H1 (cell line): ENCODE measurements at regions of chr19 and their contacts with region 1.

Region 1: DNA sequence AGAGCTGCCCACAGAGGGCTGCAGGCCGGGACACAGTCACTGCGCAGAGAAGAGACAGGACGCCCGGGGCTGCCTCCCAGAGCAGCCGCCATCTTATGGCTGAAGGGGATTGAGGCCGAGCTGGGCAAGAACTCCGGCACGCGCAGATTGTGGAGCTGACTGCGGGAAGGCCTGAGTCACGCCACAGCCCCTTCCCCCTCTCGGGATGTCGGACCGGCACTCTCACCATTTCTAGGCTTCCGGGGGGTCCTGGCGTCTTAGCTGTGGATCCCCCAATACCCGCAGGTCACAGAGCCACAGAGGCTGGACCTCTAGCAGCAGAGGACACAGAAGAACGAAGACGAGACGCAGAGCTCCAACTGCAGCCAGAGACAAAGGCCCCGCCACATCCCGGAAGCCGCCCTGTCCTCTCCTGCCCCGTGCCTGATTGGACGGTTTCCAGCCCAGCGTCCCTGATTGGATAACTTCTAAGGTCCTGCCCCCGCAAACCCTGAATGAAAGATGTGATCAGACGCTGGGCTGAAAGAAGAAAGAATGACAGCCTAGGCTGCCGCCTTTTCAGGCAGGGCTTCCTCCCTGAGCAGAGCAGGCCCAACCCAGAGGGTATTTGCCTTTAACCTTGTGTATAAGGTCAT is at the start of gene ZNF43:
- DNase-seq: peak; percentile 88
- H3K4me3 ChIP-seq: peak within 1 kb of the TSS; percentile 47 to 91 (median 75)
- H3K27ac ChIP-seq: peak within 1 kb of the TSS; percentile 99
- H3K4me1 ChIP-seq: no peaks in the 10 kb centered on the region
- H3K27me3 ChIP-seq: no peaks in the 10 kb centered on the region
- CTCF ChIP-seq: no peak
- EP300 ChIP-seq: no peak
- POLR2A ChIP-seq: peak; percentile 97 to 99
- RAD21 ChIP-seq: 0 out of 4 replicates have a peak, but pooled peaks of 1 of the 2 experiments have one; percentile 1
- total RNA-seq, gene ZNF43: 50.0 and 53.1 TPM in 2 replicates

Region 2: GRCh38 chr19:21328885-21329605 is 506.9 kb before region 1 on chr19 and contains the start of gene ZNF708:
- CTCF ChIA-PET with region 1: no interaction called
- POLR2A ChIA-PET with region 1: interaction called, 10 read pairs
- DNase-seq: peak; percentile 80 to 83
- H3K4me3 ChIP-seq: peak within 1 kb of the TSS; percentile 89 to 98 (median 95)
- H3K27ac ChIP-seq: peak within 1 kb of the TSS; percentile 98
- H3K4me1 ChIP-seq: peaks cover 0 to 4% (median 0%) of the 10 kb centered on the region in 4 experiments; a peak in 2 of 7 replicates
- H3K27me3 ChIP-seq: no peaks in the 10 kb centered on the region
- CTCF ChIP-seq: no peak
- EP300 ChIP-seq: no peak
- POLR2A ChIP-seq: peak; percentile 90 to 99
- RAD21 ChIP-seq: no peak
- total RNA-seq, gene ZNF708: 40.0 and 41.5 TPM in 2 replicates

Region 3: DNA sequence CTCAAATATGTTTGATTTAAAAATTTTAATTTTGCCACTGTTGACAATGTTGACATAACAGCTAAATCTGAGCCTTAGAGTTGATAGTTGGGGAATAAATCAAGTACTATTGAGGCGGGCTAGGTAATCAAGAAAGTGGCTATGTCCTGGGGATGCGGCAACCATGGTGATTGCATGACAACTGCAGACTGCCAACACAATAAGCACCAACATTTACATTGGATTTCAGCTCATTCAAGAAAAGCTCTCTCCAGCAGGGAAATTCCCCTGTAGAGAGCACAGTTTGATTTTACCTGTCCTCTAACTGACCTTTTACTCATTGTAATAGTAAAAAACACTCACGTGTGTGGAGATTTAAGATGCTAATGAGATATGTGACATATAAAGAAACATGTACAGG is 131.6 kb before region 1 on chr19:
- CTCF ChIA-PET with region 1: no interaction called
- POLR2A ChIA-PET with region 1: interaction called, 11 read pairs
- DNase-seq: peak in 1 of 2 experiments; percentile 61
- H3K4me3 ChIP-seq: peak overlapping the region in 1 of 4 experiments; percentile 43; a peak in 1 of 8 replicates
- H3K27ac ChIP-seq: no peak overlapping the region
- H3K4me1 ChIP-seq: peaks cover 2 to 16% (median 7%) of the 10 kb centered on the region in 4 experiments
- H3K27me3 ChIP-seq: no peaks in the 10 kb centered on the region
- CTCF ChIP-seq: no peak
- EP300 ChIP-seq: peak in 1 of 2 experiments; percentile 80; a peak in 1 of 3 replicates
- POLR2A ChIP-seq: no peak
- RAD21 ChIP-seq: peak in 1 of 2 experiments; percentile 18; a peak in 1 of 4 replicates

Region 4: GRCh38 chr19:21789466-21790080 is 46.4 kb before region 1 on chr19:
- CTCF ChIA-PET with region 1: no interaction called
- POLR2A ChIA-PET with region 1: interaction called, 13 read pairs
- DNase-seq: no peak
- H3K4me3 ChIP-seq: no peak overlapping the region
- H3K27ac ChIP-seq: no peak overlapping the region
- H3K4me1 ChIP-seq: no peaks in the 10 kb centered on the region
- H3K27me3 ChIP-seq: no peaks in the 10 kb centered on the region
- CTCF ChIP-seq: no peak
- EP300 ChIP-seq: no peak
- POLR2A ChIP-seq: no peak
- RAD21 ChIP-seq: no peak

Region 5: GRCh38 chr19:21851596-21852345 is 15.8 kb after region 1 on chr19:
- CTCF ChIA-PET with region 1: no interaction called
- POLR2A ChIA-PET with region 1: interaction called, 107 read pairs
- DNase-seq: peak; percentile 85 to 93
- H3K4me3 ChIP-seq: peak overlapping the region; percentile 92 to 99 (median 97)
- H3K27ac ChIP-seq: peak overlapping the region; percentile 99
- H3K4me1 ChIP-seq: peaks cover 0 to 9% (median 3%) of the 10 kb centered on the region in 4 experiments; a peak in 3 of 7 replicates
- H3K27me3 ChIP-seq: no peaks in the 10 kb centered on the region
- CTCF ChIP-seq: peak in 1 of 3 experiments; percentile 17; a peak in 1 of 4 replicates
- EP300 ChIP-seq: no peak
- POLR2A ChIP-seq: peak; percentile 93 to 99
- RAD21 ChIP-seq: no peak; a peak in 1 of 4 replicates